Vagina (tissue), 2 donors: ENCODE measurements at regions of chr16 and their contacts with region 1.

Region 1: DNA sequence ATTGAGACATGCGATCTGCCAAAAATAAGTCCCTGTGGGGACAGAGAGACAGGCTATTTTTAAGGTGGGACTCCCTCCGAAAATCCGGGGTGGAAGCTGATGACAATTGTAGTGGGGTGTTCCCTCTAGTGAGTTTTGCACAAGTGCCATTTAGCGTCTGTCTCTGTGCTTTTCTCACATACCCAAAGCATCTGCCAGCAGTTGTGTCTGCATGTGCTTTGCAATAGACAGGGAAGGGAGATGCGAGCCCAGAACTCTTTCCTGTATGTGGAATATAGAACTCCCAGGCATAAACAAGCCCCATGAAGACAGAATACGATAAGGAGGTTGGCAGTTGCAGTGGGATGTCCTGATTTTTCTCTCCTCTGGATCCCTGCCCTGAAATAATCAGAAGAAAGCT is 282.7 kb upstream of the XYLT1 start:
- DNase-seq: no peak
- H3K4me3 ChIP-seq: no peak overlapping the region
- H3K27ac ChIP-seq: no peak overlapping the region
- H3K4me1 ChIP-seq: no peaks in the 10 kb centered on the region
- H3K27me3 ChIP-seq: no peaks in the 10 kb centered on the region
- CTCF ChIP-seq: no peak
- POLR2A ChIP-seq: no peak

Region 2: GRCh38 chr16:17858061-17858460 is 104.6 kb after region 1 on chr16:
- intact Hi-C with region 1: no loop called
- DNase-seq: no peak
- H3K4me3 ChIP-seq: no peak overlapping the region
- H3K27ac ChIP-seq: no peak overlapping the region
- H3K4me1 ChIP-seq: no peaks in the 10 kb centered on the region
- H3K27me3 ChIP-seq: no peaks in the 10 kb centered on the region
- CTCF ChIP-seq: no peak
- POLR2A ChIP-seq: no peak

Region 3: DNA sequence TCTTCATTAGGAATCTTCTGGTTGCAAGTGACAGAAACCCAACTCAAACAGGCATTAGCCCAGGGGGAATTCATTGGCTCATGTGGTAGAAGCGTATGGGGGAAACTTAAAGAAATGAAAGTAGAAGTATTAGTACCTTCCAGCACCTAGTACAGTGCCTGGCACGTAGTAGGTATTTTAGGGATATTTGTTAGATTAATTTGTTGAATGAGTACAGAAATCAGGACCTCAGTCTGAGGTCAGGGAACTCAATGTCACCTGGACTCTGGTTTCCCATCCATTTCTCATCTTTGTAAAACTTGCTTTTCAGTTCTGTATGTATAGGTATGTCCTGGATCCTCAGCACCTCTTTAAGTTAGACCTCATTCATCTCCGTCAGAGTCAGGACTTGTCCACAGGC is 1696.8 kb after region 1 on chr16:
- intact Hi-C with region 1: loop called (anchors 5 kb)
- DNase-seq: no peak
- H3K4me3 ChIP-seq: no peak overlapping the region
- H3K27ac ChIP-seq: no peak overlapping the region
- H3K4me1 ChIP-seq: no peaks in the 10 kb centered on the region
- H3K27me3 ChIP-seq: no peaks in the 10 kb centered on the region
- CTCF ChIP-seq: no peak
- POLR2A ChIP-seq: no peak